Astrocyte of the cerebellum (primary cell): ENCODE measurements at regions of chrX and their contacts with region 1.

Region 1: DNA sequence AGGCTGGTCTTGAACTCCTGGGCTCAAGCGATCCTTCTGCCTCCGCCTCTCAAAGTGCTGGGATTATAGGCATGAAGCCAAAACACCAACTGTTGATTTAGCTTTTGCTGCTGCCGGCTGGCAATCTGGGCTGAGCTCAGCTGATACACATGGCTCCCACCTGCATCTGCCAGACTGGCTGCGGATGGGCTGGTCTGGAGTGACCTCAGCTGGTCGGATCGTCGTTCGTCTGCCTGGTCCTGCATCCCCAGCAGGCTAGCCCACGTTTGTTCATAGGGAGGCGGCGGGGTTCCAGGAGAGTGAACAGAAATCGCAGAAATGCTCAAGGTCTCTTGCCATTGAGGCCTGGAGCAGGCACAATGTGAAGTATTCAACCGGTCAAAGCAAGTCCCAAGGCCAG is 74.4 kb upstream of the DDX3X start:
- DNase-seq: no peak
- H3K4me3 ChIP-seq: no peak overlapping the region
- CTCF ChIP-seq: no peak

Region 2: GRCh38 chrX:41322821-41323603 is 63.5 kb after region 1 on chrX:
- in situ Hi-C with region 1: loop called (anchors 5 kb)
- DNase-seq: no peak
- H3K4me3 ChIP-seq: no peak overlapping the region
- CTCF ChIP-seq: no peak

Region 3: DNA sequence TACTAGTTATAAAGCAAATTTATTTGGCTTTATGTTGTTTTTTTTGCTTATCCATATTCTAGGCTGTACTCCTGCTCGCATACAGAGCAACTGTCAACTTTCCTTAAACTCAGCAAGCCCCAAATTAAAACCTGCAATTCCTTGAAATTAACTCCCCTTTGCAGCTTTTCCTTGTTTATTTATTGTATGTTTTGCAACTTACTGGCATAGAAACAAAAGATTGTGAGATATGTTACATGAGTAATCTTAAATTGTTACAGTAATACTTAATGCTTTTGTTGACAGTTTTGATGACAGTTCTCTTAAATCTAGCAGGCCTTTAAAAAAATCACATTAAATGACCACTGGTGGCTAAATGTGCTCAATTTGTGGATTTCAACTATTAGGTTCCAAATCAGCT is 78.9 kb after region 1 on chrX:
- in situ Hi-C with region 1: no loop called
- DNase-seq: no peak
- H3K4me3 ChIP-seq: no peak overlapping the region
- CTCF ChIP-seq: no peak

Region 4: GRCh38 chrX:41373989-41374606 is 114.6 kb after region 1 on chrX:
- in situ Hi-C with region 1: no loop called
- DNase-seq: no peak
- H3K4me3 ChIP-seq: no peak overlapping the region
- CTCF ChIP-seq: no peak